PC-9 (cell line): ENCODE measurements at regions of chr1 and their contacts with region 1.

Region 1: GRCh38 chr1:59143133-59143487 is 153.8 kb upstream of the FGGY start:
- DNase-seq: peak; percentile 76 to 99
- H3K4me3 ChIP-seq: peak overlapping the region; percentile 14; the same call in 1 of the 2 replicates
- H3K27ac ChIP-seq: peak overlapping the region; percentile 94
- H3K4me1 ChIP-seq: peaks cover 87% of the 10 kb centered on the region
- H3K27me3 ChIP-seq: no peaks in the 10 kb centered on the region
- CTCF ChIP-seq: no peak

Region 2: GRCh38 chr1:58739856-58740466 is 403.1 kb before region 1 on chr1:
- CTCF ChIA-PET with region 1: no interaction called
- POLR2A ChIA-PET with region 1: no interaction called
- intact Hi-C with region 1: loop called (anchors 2 kb)
- DNase-seq: peak in 1 of 2 experiments; percentile 56
- H3K4me3 ChIP-seq: no peak overlapping the region
- H3K27ac ChIP-seq: no peak overlapping the region
- H3K4me1 ChIP-seq: peaks cover 12% of the 10 kb centered on the region
- H3K27me3 ChIP-seq: no peaks in the 10 kb centered on the region
- CTCF ChIP-seq: peak; percentile 95

Region 3: DNA sequence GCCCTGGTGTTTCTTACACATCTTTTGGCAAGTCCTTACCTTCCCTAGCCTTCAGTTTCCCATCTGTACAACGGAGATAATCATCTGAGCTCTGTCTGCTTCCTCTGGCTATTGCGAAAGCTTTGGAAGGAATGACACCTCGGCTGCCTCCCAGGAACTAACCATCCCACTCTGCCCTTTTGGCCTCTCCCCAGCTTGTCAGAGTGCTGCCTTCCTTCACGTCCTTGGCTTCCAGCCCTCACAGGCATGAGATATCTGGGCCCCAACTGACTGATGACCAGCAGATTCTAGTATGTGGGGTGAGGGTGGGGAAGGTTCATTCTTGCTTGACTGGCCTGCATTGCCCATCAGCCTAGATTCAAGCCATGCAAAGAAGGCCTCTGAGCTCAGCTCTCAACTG is 99.3 kb before region 1 on chr1:
- CTCF ChIA-PET with region 1: no interaction called
- POLR2A ChIA-PET with region 1: no interaction called
- intact Hi-C with region 1: loop called (anchors 1 kb)
- DNase-seq: peak; percentile 85
- H3K4me3 ChIP-seq: no peak overlapping the region
- H3K27ac ChIP-seq: peak overlapping the region; percentile 22; the same call in 1 of the 2 replicates
- H3K4me1 ChIP-seq: peaks cover 30% of the 10 kb centered on the region
- H3K27me3 ChIP-seq: no peaks in the 10 kb centered on the region
- CTCF ChIP-seq: no peak